Mammary epithelial cell (primary cell): ENCODE measurements at regions of chr2 and their contacts with region 1.

Region 1: DNA sequence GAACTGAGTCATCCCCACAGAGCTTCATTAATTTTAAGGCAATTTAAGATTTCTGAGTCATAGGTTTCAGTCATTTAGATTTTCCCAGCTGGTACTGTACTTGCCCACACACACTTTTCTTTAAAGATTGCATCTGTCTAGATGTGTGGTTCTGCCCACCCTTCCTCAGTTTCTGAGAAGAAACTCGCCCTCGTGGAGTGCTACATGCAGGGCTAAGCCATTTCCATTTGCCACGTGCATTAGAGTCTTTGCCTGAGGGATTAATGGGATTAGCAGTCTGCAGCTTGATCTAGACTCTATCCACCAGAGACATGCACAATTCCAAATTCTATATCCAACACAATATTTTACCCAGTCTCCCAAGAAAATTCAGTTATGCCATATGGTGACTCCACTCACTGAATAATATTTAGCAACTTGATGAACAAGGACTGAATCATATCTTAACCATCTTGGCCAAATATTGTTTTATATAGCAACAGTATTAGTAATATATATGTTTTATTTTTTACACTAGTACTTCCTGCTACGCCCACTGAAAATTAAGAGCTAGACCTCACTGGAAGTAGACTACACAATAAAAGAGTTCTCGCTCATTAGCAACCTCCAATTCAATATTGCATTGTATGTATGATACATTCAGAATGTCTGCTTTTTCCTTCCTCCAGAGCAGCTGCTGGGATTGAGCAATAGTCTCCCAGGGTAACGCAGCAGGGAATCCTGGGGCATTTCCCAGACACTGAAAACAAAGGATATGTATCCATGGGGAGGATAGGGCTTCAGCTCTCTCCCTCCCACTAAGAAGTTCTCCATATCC is 14.2 kb upstream of the TRIB2 start:
- DNase-seq: peak; percentile 94
- H3K4me3 ChIP-seq: no peak overlapping the region
- H3K27ac ChIP-seq: peak overlapping the region; percentile 98
- H3K4me1 ChIP-seq: peaks cover 41% of the 10 kb centered on the region
- H3K27me3 ChIP-seq: no peaks in the 10 kb centered on the region
- CTCF ChIP-seq: no peak

Region 2: GRCh38 chr2:12456293-12457151 is 246.0 kb before region 1 on chr2:
- CTCF ChIA-PET with region 1: no interaction called
- dilution Hi-C with region 1: no loop called
- in situ Hi-C with region 1: loop called in 1 of 2 experiments (anchors 25 kb)
- intact Hi-C with region 1: loop called (anchors 5 kb)
- DNase-seq: peak; percentile 96
- H3K4me3 ChIP-seq: peak overlapping the region in 2 of 3 experiments; percentile 28 to 35
- H3K27ac ChIP-seq: peak overlapping the region; percentile 67
- H3K4me1 ChIP-seq: peaks cover 8% of the 10 kb centered on the region
- H3K27me3 ChIP-seq: no peaks in the 10 kb centered on the region
- CTCF ChIP-seq: no peak

Region 3: DNA sequence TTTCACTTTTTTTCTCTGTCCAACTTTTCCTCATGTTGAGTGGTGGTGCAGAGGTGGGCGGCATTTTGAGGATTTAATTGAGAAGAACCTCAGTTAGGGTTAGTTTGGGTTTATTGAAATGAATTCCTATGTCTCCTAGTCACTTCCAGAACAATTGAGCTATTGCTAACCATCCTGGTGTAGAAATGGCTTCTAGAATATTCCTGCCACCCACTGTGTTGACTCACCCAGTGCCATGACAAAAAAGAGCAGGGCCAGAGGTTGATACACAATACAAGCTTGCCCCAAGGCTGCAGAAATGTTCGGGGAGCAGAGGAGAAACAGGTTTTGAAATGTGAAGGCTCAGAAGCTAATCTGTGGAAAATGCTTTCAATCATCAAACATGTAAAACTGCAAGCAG is 152.9 kb before region 1 on chr2:
- CTCF ChIA-PET with region 1: interaction called, 10 read pairs
- dilution Hi-C with region 1: no loop called
- in situ Hi-C with region 1: no loop called
- intact Hi-C with region 1: no loop called
- DNase-seq: peak; percentile 84
- H3K4me3 ChIP-seq: no peak overlapping the region
- H3K27ac ChIP-seq: no peak overlapping the region
- H3K4me1 ChIP-seq: peaks cover 12% of the 10 kb centered on the region
- H3K27me3 ChIP-seq: no peaks in the 10 kb centered on the region
- CTCF ChIP-seq: no peak

Region 4: GRCh38 chr2:12587729-12588522 is 114.6 kb before region 1 on chr2:
- CTCF ChIA-PET with region 1: no interaction called
- dilution Hi-C with region 1: no loop called
- in situ Hi-C with region 1: no loop called
- intact Hi-C with region 1: loop called (anchors 5 kb)
- DNase-seq: peak; percentile 90
- H3K4me3 ChIP-seq: no peak overlapping the region
- H3K27ac ChIP-seq: peak overlapping the region; percentile 67
- H3K4me1 ChIP-seq: peaks cover 12% of the 10 kb centered on the region
- H3K27me3 ChIP-seq: no peaks in the 10 kb centered on the region
- CTCF ChIP-seq: no peak